ENCODE measurements at regions of chr16 and their contacts with region 1.

Region 1: DNA sequence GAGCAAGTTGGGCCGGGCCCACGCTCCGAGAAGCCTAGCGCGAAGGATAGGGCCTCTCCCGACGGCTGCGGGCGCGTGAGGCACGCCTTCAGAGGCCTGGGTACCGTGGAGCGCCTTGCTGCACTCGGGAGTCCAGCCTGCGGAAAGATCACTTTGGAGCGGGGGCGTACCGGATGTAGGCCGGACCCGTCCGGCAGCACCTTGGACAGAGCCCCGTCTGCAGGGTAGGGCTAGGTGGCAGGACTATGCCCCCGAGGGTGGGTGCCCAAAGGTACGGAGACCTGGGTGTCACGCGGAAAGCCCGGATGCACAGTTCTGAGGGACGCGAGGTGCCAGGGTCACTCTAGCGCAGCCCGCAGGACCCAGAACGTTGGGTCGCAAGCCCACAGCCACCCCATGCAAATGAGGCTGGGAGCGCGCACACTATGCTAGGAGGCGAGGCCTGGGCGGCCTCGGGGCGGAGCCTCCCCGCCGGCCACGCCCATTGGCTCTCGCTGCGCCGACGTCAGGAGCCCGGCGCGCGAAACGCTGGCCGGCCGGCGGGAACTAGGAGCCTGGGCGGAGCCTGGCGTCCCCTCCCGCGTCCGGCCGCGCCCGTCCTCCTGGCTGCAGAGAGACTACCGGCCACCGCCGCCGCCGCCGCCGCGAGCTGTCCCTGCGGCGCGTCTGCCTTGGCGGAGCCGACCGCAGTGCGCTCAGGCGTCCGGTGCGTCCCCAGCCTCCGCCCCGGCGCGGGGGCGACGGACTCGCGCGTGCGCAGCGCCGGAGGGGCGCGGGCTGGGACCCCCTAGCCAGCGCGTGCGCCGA is at the start of gene PAQR4:
- DNase-seq: peak; percentile 73 to 81
- ATAC-seq: peak; percentile 83 to 93
- H3K4me3 ChIP-seq: peak within 1 kb of the TSS; percentile 59 to 95 (median 68)
- H3K27ac ChIP-seq: peak within 1 kb of the TSS; percentile 41 to 73 (median 60)
- H3K4me1 ChIP-seq: peaks cover 12 to 34% of the 10 kb centered on the region in 2 donors
- H3K27me3 ChIP-seq: peaks cover 43 to 44% (median 44%) of the 10 kb centered on the region in 3 donors
- CTCF ChIP-seq: peak in 2 of 5 experiments; percentile 13 to 15
- POLR2A ChIP-seq: peak; percentile 39 to 52
- total RNA-seq, gene PAQR4: 4.2 to 14.6 (median 10.2) TPM

Region 2: GRCh38 chr16:2874912-2875362 is 94.0 kb before region 1 on chr16:
- in situ Hi-C with region 1: no loop called
- intact Hi-C with region 1: no loop called
- DNase-seq: peak; percentile 46 to 71
- ATAC-seq: peak; percentile 94 to 97
- H3K4me3 ChIP-seq: no peak overlapping the region
- H3K27ac ChIP-seq: peak overlapping the region in 2 of 4 donors; percentile 42 to 52
- H3K4me1 ChIP-seq: peaks cover 16 to 20% of the 10 kb centered on the region in 2 donors
- H3K27me3 ChIP-seq: no peaks in the 10 kb centered on the region
- CTCF ChIP-seq: peak; percentile 89 to 97 (median 93)
- POLR2A ChIP-seq: no peak

Region 3: DNA sequence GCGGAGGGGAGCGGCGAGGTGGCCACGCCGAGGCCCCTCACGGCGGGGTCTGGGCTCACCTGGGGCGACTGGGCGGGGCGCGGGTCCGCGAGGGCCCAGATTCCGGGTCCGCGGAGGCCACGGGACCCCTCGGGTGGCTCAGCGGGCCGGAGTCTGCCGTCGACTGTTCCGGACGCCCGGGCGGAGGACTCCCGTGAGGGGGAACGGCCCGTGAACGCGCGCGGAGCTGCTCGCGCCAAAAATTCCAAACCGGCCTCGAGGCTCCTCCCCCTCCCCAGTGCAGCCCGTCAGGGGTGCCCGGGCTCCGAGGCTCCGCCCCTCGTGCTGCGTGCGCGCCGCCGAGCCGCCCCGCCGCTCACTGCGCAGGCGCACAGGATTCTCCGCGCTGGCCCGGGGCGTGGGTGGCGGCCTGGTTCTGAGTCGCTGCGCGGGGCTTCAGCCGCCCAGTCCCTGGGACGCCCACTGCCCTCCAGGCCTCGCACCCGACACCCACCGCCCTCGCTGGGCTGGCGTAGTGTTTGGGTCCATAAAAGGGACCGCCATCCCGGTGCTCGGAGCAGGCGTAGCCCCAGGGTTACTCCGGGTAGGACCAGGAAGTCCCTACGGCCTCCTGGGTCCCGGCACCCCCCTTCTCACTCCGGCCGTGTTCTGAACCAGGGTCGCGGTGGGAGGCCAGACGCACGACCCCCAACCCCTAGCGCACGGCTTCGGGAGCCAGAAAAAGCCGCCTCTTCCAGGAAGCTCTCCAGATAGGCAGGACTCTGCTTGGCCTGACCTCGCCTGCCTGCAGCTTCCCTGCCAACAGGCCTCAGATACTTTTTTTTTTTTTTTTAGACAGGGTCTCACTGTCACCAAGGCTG is 11.5 kb after region 1 on chr16 and contains the start of gene PKMYT1:
- in situ Hi-C with region 1: no loop called
- intact Hi-C with region 1: loop called (anchors 1 kb)
- DNase-seq: peak; percentile 69 to 82
- ATAC-seq: peak; percentile 90 to 94
- H3K4me3 ChIP-seq: peak within 1 kb of the TSS; percentile 70 to 87 (median 82)
- H3K27ac ChIP-seq: peak within 1 kb of the TSS; percentile 76 to 89 (median 84)
- H3K4me1 ChIP-seq: peaks cover 15 to 19% of the 10 kb centered on the region in 2 donors
- H3K27me3 ChIP-seq: peaks cover 0 to 6% (median 3%) of the 10 kb centered on the region in 3 donors
- CTCF ChIP-seq: no peak
- POLR2A ChIP-seq: peak; percentile 73 to 88
- total RNA-seq, gene PKMYT1: 1.4 to 2.4 TPM in 2 of 4 donors, not detected in the others

Region 4: GRCh38 chr16:3003582-3004302 is 34.8 kb after region 1 on chr16:
- in situ Hi-C with region 1: no loop called
- intact Hi-C with region 1: no loop called
- DNase-seq: peak; percentile 97 to 98
- ATAC-seq: peak; percentile 98 to 99
- H3K4me3 ChIP-seq: peak overlapping the region in 3 of 4 donors; percentile 27 to 33 (median 28)
- H3K27ac ChIP-seq: peak overlapping the region in 3 of 4 donors; percentile 46 to 58 (median 49)
- H3K4me1 ChIP-seq: peaks cover 4 to 6% of the 10 kb centered on the region in 2 donors
- H3K27me3 ChIP-seq: peaks cover 0 to 2% (median 0%) of the 10 kb centered on the region in 3 donors
- CTCF ChIP-seq: peak; percentile 22 to 69 (median 63)
- POLR2A ChIP-seq: peak; percentile 88 to 89

Region 5: GRCh38 chr16:3045357-3045728 is 76.4 kb after region 1 on chr16:
- in situ Hi-C with region 1: no loop called
- intact Hi-C with region 1: no loop called
- DNase-seq: no peak
- ATAC-seq: no peak
- H3K4me3 ChIP-seq: peak overlapping the region; percentile 42 to 57 (median 52)
- H3K27ac ChIP-seq: no peak overlapping the region
- H3K4me1 ChIP-seq: peaks cover 0 to 15% of the 10 kb centered on the region in 2 donors
- H3K27me3 ChIP-seq: peaks cover 64 to 82% (median 77%) of the 10 kb centered on the region in 3 donors
- CTCF ChIP-seq: no peak
- POLR2A ChIP-seq: no peak

Measured in gastrocnemius medialis (tissue), 4 donors.